ENCODE measurements at regions of chr13 and their contacts with region 1.

Region 1: GRCh38 chr13:61852116-61852619 is 436.5 kb upstream of the PCDH20 start:
- DNase-seq: no peak
- H3K4me3 ChIP-seq: no peak overlapping the region
- H3K27ac ChIP-seq: no peak overlapping the region
- H3K4me1 ChIP-seq: no peaks in the 10 kb centered on the region
- H3K27me3 ChIP-seq: no peaks in the 10 kb centered on the region
- CTCF ChIP-seq: no peak
- EP300 ChIP-seq: no peak
- POLR2A ChIP-seq: no peak

Region 2: DNA sequence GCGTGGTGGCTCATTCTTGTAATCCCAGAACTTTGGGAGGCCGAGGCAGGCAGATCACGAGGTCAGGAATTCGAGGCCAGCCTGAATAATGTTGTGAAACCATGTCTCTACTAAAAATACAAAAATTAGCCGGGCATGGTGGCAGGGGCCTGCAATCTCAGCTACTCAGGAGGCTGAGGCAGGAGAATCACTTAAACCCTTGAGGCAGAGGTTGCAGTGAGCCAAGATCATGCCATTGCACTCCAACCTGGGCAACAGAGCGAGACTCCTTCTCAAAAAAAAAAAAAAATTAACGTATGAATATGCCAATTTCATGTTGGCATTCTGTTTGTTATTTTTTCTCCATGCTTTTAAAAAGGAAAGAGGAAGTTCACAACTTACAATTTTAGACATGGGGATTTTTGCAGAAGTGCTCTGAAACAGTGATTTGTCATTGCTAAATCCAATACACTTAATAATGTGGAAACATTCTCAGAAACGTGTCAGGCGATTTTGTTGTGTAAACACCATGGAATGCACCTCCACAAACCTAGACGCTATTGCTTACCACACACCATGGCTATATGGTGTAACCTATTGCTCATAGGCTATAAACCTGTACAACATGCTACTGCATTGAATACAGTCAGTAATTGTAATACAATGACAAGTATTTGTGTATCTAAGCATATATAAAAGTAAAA is 320.6 kb before region 1 on chr13:
- in situ Hi-C with region 1: no loop called
- intact Hi-C with region 1: loop called (anchors 10 kb)
- DNase-seq: no peak
- H3K4me3 ChIP-seq: no peak overlapping the region
- H3K27ac ChIP-seq: no peak overlapping the region
- H3K4me1 ChIP-seq: no peaks in the 10 kb centered on the region
- H3K27me3 ChIP-seq: no peaks in the 10 kb centered on the region
- CTCF ChIP-seq: no peak
- EP300 ChIP-seq: no peak
- POLR2A ChIP-seq: no peak